Activated T-helper 2 cell treated with anti-CD3 and anti-CD28 coated beads, Interferon-gamma antibody, Interleukin-2, Interleukin-4, amounts not matched to agents 10 μg/mL and 5 μg/mL and 100 μg/mL, durations not matched to agents 14 hours and 24 hours and 36 hours (primary cell): ENCODE measurements at regions of chr4 and their contacts with region 1.

Region 1: GRCh38 chr4:102598086-102598761 is 97.1 kb downstream of the NFKB1 start:
- DNase-seq: no peak
- H3K4me3 Mint-ChIP-seq: peak overlapping the region; percentile 57
- H3K27ac Mint-ChIP-seq: peak overlapping the region; percentile 89
- H3K4me1 Mint-ChIP-seq: peaks cover 64% of the 10 kb centered on the region
- H3K27me3 Mint-ChIP-seq: no peaks in the 10 kb centered on the region

Region 2: DNA sequence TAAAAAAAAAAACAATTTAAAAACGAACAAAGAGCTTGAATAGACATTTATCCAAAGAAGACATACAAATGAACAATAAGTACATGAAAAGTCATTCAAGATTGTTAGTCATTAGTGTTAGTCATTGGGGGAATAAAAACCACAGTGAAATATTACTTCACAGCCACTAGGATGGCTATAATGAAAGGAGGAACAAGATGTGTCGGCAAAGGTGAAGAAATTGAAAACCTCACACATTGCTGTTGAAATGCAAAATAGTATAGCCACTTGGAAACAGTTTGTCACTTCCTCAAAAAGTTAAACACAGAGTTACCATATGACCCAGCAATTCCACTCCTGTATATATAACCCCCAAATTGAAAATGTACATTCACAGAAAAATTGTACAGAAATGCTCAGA is 207.8 kb before region 1 on chr4:
- intact Hi-C with region 1: loop called (anchors 1 kb)
- DNase-seq: no peak
- H3K4me3 Mint-ChIP-seq: no peak overlapping the region
- H3K27ac Mint-ChIP-seq: peak overlapping the region; percentile 44
- H3K4me1 Mint-ChIP-seq: peaks cover 23% of the 10 kb centered on the region
- H3K27me3 Mint-ChIP-seq: peaks cover 10% of the 10 kb centered on the region

Region 3: DNA sequence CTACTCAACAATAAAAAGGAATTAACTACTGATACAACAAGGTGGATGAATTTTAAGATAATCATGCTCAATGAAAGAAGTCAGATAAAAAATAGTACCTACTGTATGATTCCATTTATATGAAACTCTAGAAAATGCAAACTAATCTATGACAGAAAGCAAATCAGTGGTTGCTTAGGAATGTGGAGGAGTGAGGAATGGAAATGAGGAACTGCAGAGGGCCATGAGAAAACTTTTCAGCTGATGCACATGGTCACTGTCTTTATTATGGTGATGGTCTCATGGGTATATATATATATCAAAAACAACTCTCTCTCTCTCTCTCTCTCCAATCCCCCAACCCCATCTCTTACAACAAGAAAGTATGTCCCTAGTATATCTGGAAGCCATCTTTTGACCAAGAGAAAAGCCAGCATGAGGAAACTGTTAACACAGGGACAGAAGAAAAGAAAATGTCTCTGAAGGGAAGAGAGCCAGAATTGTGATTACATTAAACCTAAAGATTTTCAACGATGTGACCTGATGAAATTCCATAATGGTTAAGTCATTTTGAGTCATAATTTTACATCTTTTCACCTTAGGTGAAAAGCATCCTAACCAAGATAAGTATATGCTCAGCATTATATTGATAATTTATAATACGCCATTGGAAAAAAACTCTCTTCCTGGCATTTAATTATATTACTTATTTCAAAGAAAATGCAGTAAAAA is 105.5 kb before region 1 on chr4:
- intact Hi-C with region 1: no loop called
- DNase-seq: no peak
- H3K4me3 Mint-ChIP-seq: no peak overlapping the region
- H3K27ac Mint-ChIP-seq: no peak overlapping the region
- H3K4me1 Mint-ChIP-seq: peaks cover 19% of the 10 kb centered on the region
- H3K27me3 Mint-ChIP-seq: no peaks in the 10 kb centered on the region

Region 4: GRCh38 chr4:102610007-102610406 is 11.8 kb after region 1 on chr4:
- intact Hi-C with region 1: loop called (anchors 2 kb)
- DNase-seq: no peak
- H3K4me3 Mint-ChIP-seq: no peak overlapping the region
- H3K27ac Mint-ChIP-seq: peak overlapping the region; percentile 39
- H3K4me1 Mint-ChIP-seq: peaks cover 76% of the 10 kb centered on the region
- H3K27me3 Mint-ChIP-seq: no peaks in the 10 kb centered on the region